Activated CD4-positive, alpha-beta memory T cell treated with anti-CD3 and anti-CD28 coated beads, Interleukin-2, amount 10 ng/mL, durations not matched to agents 7 days and 5 days (primary cell): ENCODE measurements at regions of chr21 and their contacts with region 1.

Region 1: GRCh38 chr21:36174780-36175179 is 18.2 kb downstream of the DOP1B start:
- DNase-seq: no peak
- H3K4me3 Mint-ChIP-seq: no peak overlapping the region
- H3K27ac Mint-ChIP-seq: peak overlapping the region; percentile 93
- H3K4me1 Mint-ChIP-seq: peaks cover 36% of the 10 kb centered on the region
- H3K27me3 Mint-ChIP-seq: no peaks in the 10 kb centered on the region

Region 2: GRCh38 chr21:35963920-35964451 is 210.8 kb before region 1 on chr21:
- CTCF ChIA-PET with region 1: no interaction called
- POLR2A ChIA-PET with region 1: no interaction called
- DNase-seq: no peak
- H3K4me3 Mint-ChIP-seq: no peak overlapping the region
- H3K27ac Mint-ChIP-seq: no peak overlapping the region
- H3K4me1 Mint-ChIP-seq: no peaks in the 10 kb centered on the region
- H3K27me3 Mint-ChIP-seq: peaks cover 8% of the 10 kb centered on the region

Region 3: DNA sequence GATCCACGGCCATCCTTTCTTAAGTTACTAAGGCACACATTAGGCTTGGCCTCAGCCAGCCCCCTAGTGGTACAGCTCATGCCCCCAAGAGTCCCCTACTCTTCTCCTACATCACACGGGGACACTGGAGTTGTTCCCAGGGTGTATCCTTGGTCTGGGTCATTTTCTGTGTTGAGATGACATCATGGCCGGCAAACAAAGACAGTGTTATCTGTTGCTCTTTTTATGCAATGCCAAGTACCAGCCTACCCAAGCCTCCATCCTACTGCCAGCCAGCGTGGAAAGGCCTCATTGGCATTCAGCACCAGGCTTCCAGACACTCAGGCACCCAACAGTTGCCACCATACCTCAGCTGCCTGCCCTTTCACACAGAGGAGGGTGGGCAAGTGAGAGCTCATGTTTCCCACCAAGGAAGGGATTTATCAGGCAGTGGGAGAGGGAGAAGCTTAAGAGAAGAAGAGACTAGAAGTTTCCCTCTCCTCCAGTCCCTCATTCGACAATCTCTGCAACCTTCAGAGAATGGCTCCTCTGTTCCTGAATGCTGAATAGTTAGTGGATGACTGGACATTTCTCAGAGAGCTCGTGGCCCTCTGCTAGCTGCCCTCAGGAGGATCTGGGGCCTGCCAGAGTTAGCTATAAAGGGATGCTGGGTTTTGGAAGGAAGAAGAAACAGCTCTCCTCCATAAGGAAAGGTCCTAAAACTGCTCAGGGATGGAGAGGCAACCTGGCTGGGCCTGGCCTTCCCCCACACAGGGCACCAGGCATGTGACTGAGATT is 87.2 kb before region 1 on chr21:
- CTCF ChIA-PET with region 1: no interaction called
- POLR2A ChIA-PET with region 1: no interaction called
- DNase-seq: no peak
- H3K4me3 Mint-ChIP-seq: no peak overlapping the region
- H3K27ac Mint-ChIP-seq: no peak overlapping the region
- H3K4me1 Mint-ChIP-seq: peaks cover 3% of the 10 kb centered on the region
- H3K27me3 Mint-ChIP-seq: no peaks in the 10 kb centered on the region

Region 4: GRCh38 chr21:36156339-36156814 is 18.4 kb before region 1 on chr21:
- CTCF ChIA-PET with region 1: interaction called, 16 read pairs
- POLR2A ChIA-PET with region 1: interaction called, 12 read pairs
- DNase-seq: peak; percentile 100
- H3K4me3 Mint-ChIP-seq: peak overlapping the region; percentile 80
- H3K27ac Mint-ChIP-seq: peak overlapping the region; percentile 31
- H3K4me1 Mint-ChIP-seq: peaks cover 41% of the 10 kb centered on the region
- H3K27me3 Mint-ChIP-seq: peaks cover 6% of the 10 kb centered on the region

Region 5: GRCh38 chr21:36209626-36210171 is 34.9 kb after region 1 on chr21:
- CTCF ChIA-PET with region 1: interaction called, 17 read pairs
- POLR2A ChIA-PET with region 1: interaction called, 4 read pairs
- DNase-seq: peak; percentile 68
- H3K4me3 Mint-ChIP-seq: no peak overlapping the region
- H3K27ac Mint-ChIP-seq: no peak overlapping the region
- H3K4me1 Mint-ChIP-seq: peaks cover 37% of the 10 kb centered on the region
- H3K27me3 Mint-ChIP-seq: no peaks in the 10 kb centered on the region